ENCODE measurements at regions of chr21 and their contacts with region 1.

Region 1: DNA sequence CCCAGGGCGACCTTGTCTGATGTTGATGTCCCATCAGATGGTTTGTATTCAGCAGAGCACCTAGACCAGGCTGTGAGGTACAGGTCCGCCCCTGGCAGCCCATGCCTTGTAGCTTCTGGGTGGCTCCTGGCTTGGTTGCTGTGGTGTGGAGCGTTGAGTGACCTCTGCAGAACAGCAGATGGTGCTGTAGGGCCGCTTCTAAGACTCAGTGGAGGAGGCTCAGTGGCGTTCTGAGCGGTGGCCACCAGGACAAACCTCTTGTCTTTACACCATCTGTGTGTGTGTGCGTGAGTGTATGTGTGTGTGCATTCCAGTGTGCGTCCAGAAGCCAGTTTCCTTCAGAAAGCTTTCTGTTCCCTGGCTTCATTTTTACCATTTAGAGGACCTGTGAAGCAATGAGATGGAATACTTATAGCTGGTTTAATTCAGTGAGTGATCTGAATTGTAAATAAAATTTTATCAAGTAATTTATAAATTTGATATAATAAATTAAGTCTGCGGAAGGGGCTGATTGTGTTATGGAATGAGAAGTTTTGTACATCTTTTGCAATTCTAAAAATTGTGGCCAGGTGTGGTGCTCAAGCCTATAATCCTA is 66.1 kb downstream of the ADARB1 start:
- DNase-seq: peak; percentile 86
- CTCF ChIP-seq: peak; percentile 87

Region 2: DNA sequence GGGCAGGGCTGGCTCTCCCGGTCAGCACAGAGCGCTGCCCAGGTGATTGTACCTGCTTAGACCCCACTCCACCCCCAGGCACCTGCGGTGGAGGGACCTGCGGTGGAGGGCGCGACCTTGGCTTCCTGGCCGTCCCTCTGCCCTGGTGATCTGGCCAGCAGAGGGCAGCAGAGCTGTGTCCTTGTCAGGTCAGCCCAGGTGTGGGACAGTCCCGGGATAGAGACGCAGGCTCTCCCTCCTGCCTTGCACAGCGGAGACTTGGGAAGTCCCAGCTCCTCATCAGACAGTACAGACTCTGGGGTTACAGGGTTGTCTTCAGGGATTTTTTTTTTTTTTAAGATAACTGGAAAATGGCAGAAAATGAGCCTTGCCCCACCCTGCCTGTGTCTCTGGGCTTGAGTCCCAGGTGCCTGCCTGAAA is 190.7 kb before region 1 on chr21:
- CTCF ChIA-PET with region 1: interaction called, 313 read pairs
- POLR2A ChIA-PET with region 1: no interaction called
- DNase-seq: peak; percentile 90
- CTCF ChIP-seq: peak; percentile 97

Region 3: GRCh38 chr21:45087022-45087823 is 53.2 kb before region 1 on chr21:
- CTCF ChIA-PET with region 1: interaction called, 14 read pairs
- POLR2A ChIA-PET with region 1: no interaction called
- DNase-seq: no peak
- CTCF ChIP-seq: no peak

Region 4: GRCh38 chr21:45130324-45130774 is 10.1 kb before region 1 on chr21:
- CTCF ChIA-PET with region 1: interaction called, 216 read pairs
- POLR2A ChIA-PET with region 1: no interaction called
- DNase-seq: no peak
- CTCF ChIP-seq: no peak

Region 5: DNA sequence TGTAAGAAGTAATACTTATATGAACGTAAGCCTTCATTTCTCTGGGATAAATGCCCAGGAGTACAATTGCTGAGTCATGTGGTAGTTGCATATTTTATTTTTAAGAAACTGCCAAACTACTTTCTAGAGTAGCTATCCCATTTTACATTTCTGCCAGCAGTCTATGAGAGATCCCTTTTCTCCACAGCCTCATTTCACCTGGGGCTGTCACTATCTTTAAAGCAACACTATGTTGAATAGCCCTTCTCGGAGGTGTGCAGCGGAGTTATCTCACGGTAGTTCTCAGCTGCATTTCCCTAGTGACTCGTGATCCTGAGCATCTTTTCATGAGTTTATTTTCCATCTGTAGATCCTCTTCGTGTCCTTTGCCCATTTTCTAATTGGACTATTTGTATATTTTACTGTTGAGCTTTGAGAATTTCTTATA is 27.4 kb after region 1 on chr21:
- CTCF ChIA-PET with region 1: interaction called, 14 read pairs
- POLR2A ChIA-PET with region 1: no interaction called
- DNase-seq: no peak
- CTCF ChIP-seq: no peak

Region 6: GRCh38 chr21:45439161-45439872 is 298.9 kb after region 1 on chr21:
- CTCF ChIA-PET with region 1: interaction called, 28 read pairs
- POLR2A ChIA-PET with region 1: no interaction called
- DNase-seq: peak; percentile 91
- CTCF ChIP-seq: peak; percentile 84